Heart right ventricle (tissue), 16 donors: ENCODE measurements at regions of chr2 and their contacts with region 1.

Region 1: GRCh38 chr2:176653479-176654443 is 384.5 kb downstream of the MTX2 start:
- DNase-seq: peak; percentile 45
- ATAC-seq: peak; percentile 38 to 87 (median 67)
- H3K4me3 ChIP-seq: no peak overlapping the region
- H3K27ac ChIP-seq: no peak overlapping the region
- H3K4me1 ChIP-seq: peaks cover 0 to 7% (median 0%) of the 10 kb centered on the region in 9 donors
- H3K27me3 ChIP-seq: peaks cover 0 to 67% (median 29%) of the 10 kb centered on the region in 7 donors
- CTCF ChIP-seq: peak; percentile 34 to 69 (median 67)

Region 2: GRCh38 chr2:175690113-175690837 is 963.5 kb before region 1 on chr2:
- intact Hi-C with region 1: loop called in 1 of 10 experiments (anchors 5 kb)
- DNase-seq: peak in 1 of 2 donors; percentile 47
- ATAC-seq: peak in 1 of 8 donors; percentile 61
- H3K4me3 ChIP-seq: no peak overlapping the region
- H3K27ac ChIP-seq: no peak overlapping the region
- H3K4me1 ChIP-seq: no peaks in the 10 kb centered on the region
- H3K27me3 ChIP-seq: peaks cover 0 to 55% (median 34%) of the 10 kb centered on the region in 7 donors
- CTCF ChIP-seq: peak in 8 of 9 donors; percentile 55 to 87 (median 76)

Region 3: DNA sequence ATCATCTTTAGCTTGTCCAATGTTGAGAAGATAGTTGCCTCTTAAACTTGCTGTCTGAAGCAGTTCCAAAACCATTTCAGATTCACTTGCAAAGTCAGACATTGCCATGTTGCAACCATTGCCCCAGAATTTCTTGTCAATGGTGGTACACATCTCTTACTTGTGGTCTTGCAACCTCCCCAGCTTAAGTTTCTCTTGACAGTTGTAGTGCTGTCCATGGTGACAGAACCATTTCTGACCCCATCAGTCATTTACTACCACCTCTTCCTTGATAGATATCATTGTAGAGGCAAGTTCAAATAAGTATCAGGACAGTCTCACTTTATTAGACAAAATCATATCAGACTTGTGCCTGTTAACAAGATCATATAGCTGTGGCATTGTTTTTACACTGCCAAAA is 151.6 kb after region 1 on chr2:
- intact Hi-C with region 1: loop called in 5 of 10 experiments (anchors 5 to 10 kb)
- DNase-seq: no peak
- ATAC-seq: no peak
- H3K4me3 ChIP-seq: no peak overlapping the region
- H3K27ac ChIP-seq: no peak overlapping the region
- H3K4me1 ChIP-seq: no peaks in the 10 kb centered on the region
- H3K27me3 ChIP-seq: no peaks in the 10 kb centered on the region
- CTCF ChIP-seq: no peak

Region 4: DNA sequence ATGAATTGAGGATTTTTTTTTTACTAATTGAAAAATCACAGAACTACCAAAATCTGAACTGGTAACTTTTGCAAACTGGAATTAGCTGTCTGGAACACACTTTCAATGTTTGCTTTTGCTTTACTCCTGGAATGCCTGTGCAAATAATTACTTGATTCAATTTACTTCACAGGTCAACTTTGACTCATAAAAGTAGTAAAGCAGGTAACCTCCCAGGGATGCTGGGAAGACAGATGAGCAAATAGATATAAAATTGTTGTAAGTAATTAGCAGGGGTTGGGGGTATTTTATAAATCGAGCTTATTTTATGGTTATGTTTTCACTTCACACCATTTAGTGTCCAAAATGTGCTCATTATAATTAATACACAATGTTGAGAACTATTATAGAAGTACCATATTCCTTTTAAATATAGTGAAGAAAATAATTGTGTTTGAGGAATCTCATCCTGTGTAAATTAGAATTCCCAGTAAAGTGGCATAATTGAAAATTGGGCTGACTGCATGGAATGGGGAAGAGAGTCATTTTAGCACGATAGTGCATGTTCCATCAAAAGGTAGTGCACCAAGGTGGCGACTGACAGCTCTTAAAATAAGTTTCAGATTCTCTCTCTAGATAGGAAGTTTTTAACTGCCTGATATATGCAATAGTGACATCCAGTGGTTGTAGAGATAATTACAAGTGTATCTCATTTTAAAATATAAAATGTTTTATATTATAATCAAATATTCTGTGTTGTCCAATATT is 160.7 kb after region 1 on chr2:
- intact Hi-C with region 1: loop called in 9 of 10 experiments (anchors 2 to 10 kb)
- DNase-seq: no peak
- ATAC-seq: no peak
- H3K4me3 ChIP-seq: no peak overlapping the region
- H3K27ac ChIP-seq: no peak overlapping the region
- H3K4me1 ChIP-seq: peaks cover 0 to 9% (median 0%) of the 10 kb centered on the region in 9 donors
- H3K27me3 ChIP-seq: peaks cover 0 to 13% (median 5%) of the 10 kb centered on the region in 7 donors
- CTCF ChIP-seq: peak; percentile 38 to 78 (median 66)

Region 5: GRCh38 chr2:177078416-177078815 is 424.7 kb after region 1 on chr2:
- intact Hi-C with region 1: no loop called
- DNase-seq: peak in 1 of 2 donors; percentile 19
- ATAC-seq: peak in 2 of 8 donors; percentile 50 to 53
- H3K4me3 ChIP-seq: no peak overlapping the region
- H3K27ac ChIP-seq: no peak overlapping the region
- H3K4me1 ChIP-seq: no peaks in the 10 kb centered on the region
- H3K27me3 ChIP-seq: peaks cover 0 to 12% (median 5%) of the 10 kb centered on the region in 7 donors
- CTCF ChIP-seq: no peak

Region 6: DNA sequence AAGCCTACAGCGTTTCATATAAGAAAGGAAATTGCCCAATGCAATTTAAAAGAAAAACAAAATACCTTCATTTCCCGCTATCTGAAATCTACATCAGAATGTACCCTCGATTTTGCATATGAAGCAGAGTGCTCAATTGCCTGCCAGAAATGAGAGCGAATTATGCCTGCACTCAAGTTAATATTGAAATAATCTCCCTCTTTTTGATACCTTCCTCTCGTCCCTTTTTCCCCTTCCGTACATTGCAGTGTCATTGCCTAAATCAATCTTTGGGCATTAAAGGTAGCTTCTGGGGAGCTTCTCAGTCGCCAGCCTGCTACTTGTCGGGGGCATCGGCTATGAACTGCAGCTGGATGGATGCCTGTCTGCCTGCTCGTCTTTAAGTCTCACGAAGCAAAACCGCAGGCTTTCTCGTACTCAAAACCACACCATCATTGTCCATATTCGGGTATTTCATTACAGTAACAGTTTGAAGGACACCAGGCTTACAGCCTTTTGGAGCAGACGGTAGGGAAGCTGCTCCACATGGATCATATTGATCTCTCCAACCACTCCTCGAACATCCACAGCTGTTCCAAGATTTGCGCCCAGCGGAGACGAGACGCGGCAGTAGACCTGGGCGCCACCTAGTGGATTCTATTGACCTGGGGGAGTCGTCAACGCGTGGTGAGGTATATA is 494.9 kb after region 1 on chr2:
- intact Hi-C with region 1: loop called in 7 of 10 experiments (anchors 5 to 10 kb)
- DNase-seq: peak; percentile 57 to 71
- ATAC-seq: peak; percentile 55 to 92 (median 82)
- H3K4me3 ChIP-seq: peak overlapping the region in 9 of 10 donors; percentile 9 to 47 (median 44)
- H3K27ac ChIP-seq: no peak overlapping the region
- H3K4me1 ChIP-seq: peaks cover 0 to 16% (median 8%) of the 10 kb centered on the region in 9 donors
- H3K27me3 ChIP-seq: peaks cover 0 to 85% (median 72%) of the 10 kb centered on the region in 7 donors
- CTCF ChIP-seq: peak; percentile 48 to 87 (median 78)